ENCODE measurements at regions of chr11 and their contacts with region 1.

Region 1: GRCh38 chr11:78188286-78189173 is at the starts of genes KCTD21 and USP35:
- DNase-seq: peak; percentile 95
- H3K4me3 Mint-ChIP-seq: peak within 1 kb of the TSS; percentile 98
- H3K27ac Mint-ChIP-seq: peak within 1 kb of the TSS; percentile 98
- H3K4me1 Mint-ChIP-seq: peaks cover 57% of the 10 kb centered on the region
- H3K27me3 Mint-ChIP-seq: no peaks in the 10 kb centered on the region
- total RNA-seq, gene KCTD21: 7.9 to 8.8 TPM
- total RNA-seq, gene USP35: 9.3 to 9.6 TPM

Region 2: DNA sequence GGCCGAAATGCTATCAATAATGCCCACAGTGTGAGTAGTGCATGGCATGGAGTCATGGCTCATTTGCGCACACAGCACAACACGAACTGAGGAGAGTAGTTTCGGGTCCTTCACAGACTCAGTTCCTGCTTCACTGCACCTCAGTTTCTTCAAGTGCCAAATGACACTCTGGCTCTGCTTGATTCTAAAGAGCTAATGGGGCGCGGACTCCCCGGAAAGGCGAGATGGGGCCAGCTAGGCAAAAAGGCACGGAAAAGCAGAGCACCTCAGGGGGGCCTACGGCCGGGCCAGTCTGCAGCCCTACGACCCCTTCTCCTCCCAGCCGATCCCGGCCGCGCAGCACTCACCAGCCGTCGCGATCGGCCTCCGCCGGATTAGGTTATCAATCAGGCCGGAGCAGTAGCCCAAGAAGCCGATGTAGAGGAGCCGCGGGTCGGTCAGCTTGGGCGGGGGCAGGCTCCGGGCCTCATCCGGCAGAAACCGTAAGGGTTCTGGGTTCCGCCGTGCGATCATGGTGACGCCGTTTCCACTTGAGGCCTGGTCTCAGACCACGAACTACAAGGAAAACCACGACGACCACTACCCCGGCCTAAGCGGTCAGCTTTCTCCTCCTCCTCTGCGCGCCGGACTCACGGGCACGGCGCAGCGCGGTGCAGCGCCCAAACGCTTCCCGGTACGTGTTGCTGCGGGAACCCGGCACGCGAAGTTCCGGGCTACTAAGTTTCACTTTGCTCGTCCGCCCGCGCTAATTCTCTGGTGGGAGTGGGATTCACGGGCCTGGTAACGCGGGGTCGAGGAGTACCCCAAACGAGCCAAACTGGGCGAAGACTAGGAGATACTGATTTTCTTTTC is 109.1 kb before region 1 on chr11 and contains the start of gene NDUFC2:
- CTCF ChIA-PET with region 1: no interaction called
- POLR2A ChIA-PET with region 1: interaction called, 5 read pairs
- intact Hi-C with region 1: loop called (anchors 2 kb)
- DNase-seq: peak; percentile 77
- H3K4me3 Mint-ChIP-seq: peak within 1 kb of the TSS; percentile 91
- H3K27ac Mint-ChIP-seq: peak within 1 kb of the TSS; percentile 83
- H3K4me1 Mint-ChIP-seq: peaks cover 40% of the 10 kb centered on the region
- H3K27me3 Mint-ChIP-seq: no peaks in the 10 kb centered on the region
- total RNA-seq, gene NDUFC2: 209 to 230 TPM

Region 3: GRCh38 chr11:78202733-78203167 is 14.2 kb after region 1 on chr11:
- CTCF ChIA-PET with region 1: interaction called, 4 read pairs
- POLR2A ChIA-PET with region 1: interaction called, 13 read pairs
- intact Hi-C with region 1: loop called (anchors 1 kb)
- DNase-seq: peak; percentile 69
- H3K4me3 Mint-ChIP-seq: peak overlapping the region; percentile 63
- H3K27ac Mint-ChIP-seq: peak overlapping the region; percentile 90
- H3K4me1 Mint-ChIP-seq: peaks cover 37% of the 10 kb centered on the region
- H3K27me3 Mint-ChIP-seq: no peaks in the 10 kb centered on the region

Region 4: DNA sequence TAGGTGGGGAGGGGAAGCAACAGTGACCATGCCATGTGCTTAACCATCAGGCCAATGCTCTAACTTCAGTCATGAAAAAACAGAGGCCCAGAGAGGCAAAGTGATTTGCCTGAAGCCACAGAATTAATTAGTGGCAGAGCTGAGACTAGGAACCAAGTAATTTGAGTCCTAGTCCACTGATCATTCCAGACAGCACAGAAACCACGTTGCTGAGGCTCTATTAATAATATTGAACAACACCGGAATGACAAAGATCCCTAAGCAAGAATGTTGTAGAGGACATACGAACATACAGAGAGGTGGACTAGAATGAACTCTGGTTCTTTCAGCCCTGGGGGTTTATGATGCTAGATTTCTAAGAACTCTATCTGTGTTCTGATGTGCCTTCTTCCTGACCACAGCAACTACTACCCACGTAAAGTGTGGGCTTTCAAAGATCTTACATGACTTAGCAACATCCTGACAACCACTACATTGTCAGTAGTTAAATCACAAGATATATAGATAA is 136.8 kb after region 1 on chr11:
- CTCF ChIA-PET with region 1: no interaction called
- POLR2A ChIA-PET with region 1: no interaction called
- intact Hi-C with region 1: loop called (anchors 5 kb)
- DNase-seq: peak; percentile 16
- H3K4me3 Mint-ChIP-seq: no peak overlapping the region
- H3K27ac Mint-ChIP-seq: peak overlapping the region; percentile 77
- H3K4me1 Mint-ChIP-seq: peaks cover 40% of the 10 kb centered on the region
- H3K27me3 Mint-ChIP-seq: no peaks in the 10 kb centered on the region